Mammary epithelial cell (primary cell): ENCODE measurements at regions of chr7 and their contacts with region 1.

Region 1: DNA sequence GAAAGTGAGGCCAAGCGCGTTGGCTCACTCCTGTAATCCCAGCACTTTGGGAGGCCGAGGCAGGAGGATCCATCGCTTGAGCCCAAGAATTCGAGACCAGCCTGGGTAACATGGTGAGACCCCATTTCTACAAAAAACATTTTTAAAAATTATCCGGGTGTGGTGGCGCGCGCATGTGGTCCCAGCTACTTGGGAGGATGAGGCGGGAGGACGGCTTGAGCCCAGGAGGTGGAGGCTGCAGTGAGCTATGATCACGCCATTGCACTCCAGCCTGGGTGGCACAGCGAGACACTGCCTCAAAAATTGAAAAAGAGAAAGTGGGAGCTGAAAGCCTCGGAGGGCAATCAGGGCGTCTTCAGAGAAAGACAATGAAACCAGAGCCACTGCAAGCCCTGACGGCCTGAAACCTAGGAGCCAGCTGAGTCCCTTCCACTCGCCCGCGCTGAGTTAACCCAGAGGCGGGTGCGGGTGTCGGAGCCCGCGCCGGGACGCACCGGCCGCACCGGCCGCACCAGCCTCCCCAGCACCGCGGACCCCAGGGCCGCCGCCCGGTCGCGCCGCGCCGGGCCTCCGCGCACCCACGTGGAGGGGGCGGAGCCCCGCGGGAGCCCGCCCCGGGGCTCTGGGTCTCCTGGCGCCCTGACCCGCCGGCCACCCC is 22.4 kb downstream of the ZFAND2A start:
- DNase-seq: peak; percentile 21
- H3K4me3 ChIP-seq: peak overlapping the region; percentile 79 to 90 (median 89)
- H3K27ac ChIP-seq: peak overlapping the region; percentile 93
- H3K4me1 ChIP-seq: peaks cover 6% of the 10 kb centered on the region
- H3K27me3 ChIP-seq: no peaks in the 10 kb centered on the region
- CTCF ChIP-seq: no peak

Region 2: GRCh38 chr7:1076181-1077072 is 61.2 kb before region 1 on chr7:
- CTCF ChIA-PET with region 1: no interaction called
- dilution Hi-C with region 1: loop called (anchors 5 kb)
- in situ Hi-C with region 1: no loop called
- intact Hi-C with region 1: no loop called
- DNase-seq: peak; percentile 61
- H3K4me3 ChIP-seq: peak overlapping the region in 2 of 3 experiments; percentile 9 to 13
- H3K27ac ChIP-seq: peak overlapping the region; percentile 46
- H3K4me1 ChIP-seq: peaks cover 11% of the 10 kb centered on the region
- H3K27me3 ChIP-seq: no peaks in the 10 kb centered on the region
- CTCF ChIP-seq: no peak

Region 3: DNA sequence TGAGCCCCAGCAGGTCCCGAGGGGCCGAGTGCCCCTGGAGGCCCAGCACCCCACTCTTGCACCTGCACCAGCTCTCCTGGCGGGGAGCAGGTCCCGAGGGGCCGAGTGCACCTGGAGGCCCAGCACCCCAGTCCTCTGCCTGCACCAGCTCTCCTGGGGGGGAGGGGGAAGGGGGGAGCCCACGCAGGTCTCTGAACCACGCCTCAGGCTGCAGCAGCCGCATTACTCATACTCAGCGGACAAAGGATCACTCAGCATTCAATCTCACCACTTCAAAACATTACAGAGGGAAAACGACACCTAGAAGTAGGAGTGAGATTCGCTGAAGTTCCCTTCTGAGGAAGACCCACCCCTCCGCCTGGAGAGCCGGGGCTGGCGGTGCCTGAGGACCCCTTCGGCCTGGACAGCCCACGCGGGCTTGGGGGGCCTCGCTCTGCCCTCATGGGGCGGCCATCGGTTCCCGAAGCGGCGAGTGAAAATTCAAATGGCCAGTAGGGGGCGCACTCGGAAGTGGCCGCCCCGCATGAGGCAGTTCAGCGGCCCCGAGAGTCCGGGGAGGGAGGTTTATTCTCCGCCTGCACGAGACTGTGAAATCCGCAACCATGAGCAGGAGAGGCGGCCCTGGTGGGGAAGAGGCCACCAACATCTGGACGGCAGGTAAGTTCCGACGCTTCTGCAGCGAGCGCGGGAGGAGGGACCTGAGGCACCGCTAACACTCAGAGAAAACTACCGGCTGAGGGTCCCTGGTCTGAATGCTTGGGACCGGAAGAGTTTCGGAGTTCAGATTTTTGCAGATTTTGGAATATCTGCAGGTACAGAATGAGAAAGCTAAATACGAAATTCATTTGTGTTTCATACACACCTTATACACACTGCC is 50.8 kb before region 1 on chr7:
- CTCF ChIA-PET with region 1: interaction called, 4 read pairs
- dilution Hi-C with region 1: no loop called
- in situ Hi-C with region 1: no loop called
- intact Hi-C with region 1: loop called (anchors 1 kb)
- DNase-seq: peak; percentile 71
- H3K4me3 ChIP-seq: peak overlapping the region; percentile 38 to 45 (median 43)
- H3K27ac ChIP-seq: peak overlapping the region; percentile 50
- H3K4me1 ChIP-seq: peaks cover 21% of the 10 kb centered on the region
- H3K27me3 ChIP-seq: no peaks in the 10 kb centered on the region
- CTCF ChIP-seq: peak; percentile 53 to 85

Region 4: DNA sequence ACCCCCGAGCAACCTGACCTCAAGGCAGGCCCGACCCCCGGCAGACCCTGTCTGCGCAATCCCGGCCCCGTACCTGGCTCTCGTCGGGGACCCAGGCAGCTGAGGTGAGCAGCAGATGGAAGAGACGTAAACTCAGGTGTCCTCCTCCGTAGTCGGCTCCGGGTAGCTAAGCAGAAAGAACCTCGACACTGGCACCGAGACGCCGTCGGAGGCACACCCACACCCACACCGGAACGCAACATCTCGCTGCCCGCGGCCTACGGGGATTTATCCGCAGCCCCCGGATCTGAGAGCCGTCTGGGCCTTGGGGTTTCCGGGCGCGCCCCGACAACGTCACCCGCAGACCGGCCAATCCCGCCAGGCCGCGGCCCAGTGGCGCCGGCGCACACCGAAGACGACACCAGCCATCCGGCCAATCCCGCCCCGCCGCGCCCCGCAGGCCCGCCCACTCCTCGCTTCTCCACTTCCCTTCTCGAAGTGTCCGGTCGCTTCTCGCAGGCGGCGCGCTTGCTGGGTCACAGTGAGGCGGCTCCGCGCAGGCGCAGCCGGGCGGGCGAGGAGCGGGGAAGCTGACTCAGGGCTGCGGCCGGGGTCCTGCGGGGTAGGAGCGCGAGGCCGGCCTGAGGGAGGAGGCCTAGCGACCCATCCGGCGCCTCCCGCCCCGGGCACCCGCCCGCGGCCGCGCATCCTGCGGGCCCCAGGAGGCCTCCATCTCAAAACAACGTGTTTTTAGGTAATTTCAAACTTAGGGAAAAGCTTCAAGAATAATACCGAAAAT is 22.4 kb after region 1 on chr7 and contains the start of gene ZFAND2A:
- CTCF ChIA-PET with region 1: no interaction called
- dilution Hi-C with region 1: no loop called
- in situ Hi-C with region 1: no loop called
- intact Hi-C with region 1: loop called (anchors 1 kb)
- DNase-seq: peak; percentile 98
- H3K4me3 ChIP-seq: peak within 1 kb of the TSS; percentile 97 to 100 (median 98)
- H3K27ac ChIP-seq: peak within 1 kb of the TSS; percentile 81
- H3K4me1 ChIP-seq: peaks cover 20% of the 10 kb centered on the region
- H3K27me3 ChIP-seq: no peaks in the 10 kb centered on the region
- CTCF ChIP-seq: no peak
- total RNA-seq, gene ZFAND2A: 11.5 to 20.8 TPM

Region 5: DNA sequence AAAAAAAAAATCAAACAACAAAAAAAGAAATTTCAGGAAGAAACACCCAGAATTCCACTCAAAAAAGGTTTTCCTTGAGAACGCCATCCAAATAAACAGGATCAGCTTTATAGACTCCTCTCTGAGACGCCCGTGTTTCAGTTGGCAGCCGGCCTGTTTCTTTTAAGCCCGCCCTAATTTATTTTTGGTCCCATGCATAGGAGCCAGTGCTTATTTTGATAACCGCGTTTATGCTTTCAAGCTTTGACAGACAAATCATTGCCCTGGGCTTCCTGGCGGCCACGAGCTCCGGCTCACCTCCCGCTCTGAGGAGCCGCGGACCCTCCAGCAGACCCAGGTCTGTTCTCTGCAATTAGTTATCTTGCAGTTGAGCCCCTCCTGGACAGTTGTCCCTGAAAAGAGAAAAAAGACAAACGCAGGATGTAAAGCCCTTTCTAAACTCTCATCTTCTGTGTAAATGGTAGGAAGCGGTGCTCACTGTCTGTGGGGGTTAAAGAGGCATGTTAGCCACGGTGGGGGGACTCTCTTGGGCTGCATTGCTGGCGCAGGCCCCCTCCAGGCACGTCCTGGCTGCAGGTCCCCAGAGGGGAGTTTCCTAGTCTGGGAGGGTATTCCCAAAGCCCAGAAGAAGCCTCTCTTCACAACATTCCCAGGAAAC is 72.8 kb after region 1 on chr7:
- CTCF ChIA-PET with region 1: no interaction called
- dilution Hi-C with region 1: no loop called
- in situ Hi-C with region 1: no loop called
- intact Hi-C with region 1: no loop called
- DNase-seq: no peak
- H3K4me3 ChIP-seq: no peak overlapping the region
- H3K27ac ChIP-seq: no peak overlapping the region
- H3K4me1 ChIP-seq: peaks cover 5% of the 10 kb centered on the region
- H3K27me3 ChIP-seq: peaks cover 29% of the 10 kb centered on the region
- CTCF ChIP-seq: no peak

Region 6: DNA sequence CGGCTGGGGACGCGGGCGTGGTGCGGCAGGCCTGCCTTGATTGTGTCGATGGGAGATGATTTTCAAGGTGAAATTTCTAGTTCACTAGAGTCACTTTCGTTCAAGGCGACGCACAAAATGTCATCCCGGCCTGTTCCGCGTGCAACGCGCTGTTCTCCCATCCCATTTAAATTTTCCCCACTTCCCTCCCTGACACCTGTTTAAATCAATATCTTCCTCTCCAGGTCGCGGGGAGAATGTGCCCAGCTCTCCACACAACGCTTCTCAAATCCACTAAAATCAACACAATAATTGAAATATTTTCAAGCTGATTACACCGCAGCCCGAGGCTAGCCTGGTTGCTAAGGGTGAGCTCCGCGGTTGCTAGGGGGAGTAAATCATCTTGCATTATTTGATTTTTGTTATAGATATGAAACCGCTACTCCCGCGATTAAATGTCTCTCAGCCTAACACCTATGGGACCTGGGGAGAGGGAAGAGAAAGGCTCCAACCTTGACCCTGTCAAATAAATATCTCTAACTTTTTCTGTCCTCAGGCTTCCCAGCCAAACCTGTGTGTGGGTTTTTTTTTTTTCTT is 131.2 kb after region 1 on chr7:
- CTCF ChIA-PET with region 1: no interaction called
- dilution Hi-C with region 1: no loop called
- in situ Hi-C with region 1: no loop called
- intact Hi-C with region 1: no loop called
- DNase-seq: peak; percentile 17
- H3K4me3 ChIP-seq: no peak overlapping the region
- H3K27ac ChIP-seq: no peak overlapping the region
- H3K4me1 ChIP-seq: no peaks in the 10 kb centered on the region
- H3K27me3 ChIP-seq: peaks cover 17% of the 10 kb centered on the region
- CTCF ChIP-seq: no peak